GM12878 (cell line): ENCODE measurements at regions of chr21 and their contacts with region 1.

Region 1: GRCh38 chr21:34693192-34693810 is 24.5 kb downstream of the CLIC6 start:
- DNase-seq: no peak
- ATAC-seq: peak; percentile 27
- H3K4me3 ChIP-seq: no peak overlapping the region
- H3K27ac ChIP-seq: peak overlapping the region; percentile 58
- H3K4me1 ChIP-seq: peaks cover 51% of the 10 kb centered on the region
- H3K27me3 ChIP-seq: no peaks in the 10 kb centered on the region
- CTCF ChIP-seq: peak; percentile 66 to 90 (median 73)
- EP300 ChIP-seq: no peak
- POLR2A ChIP-seq: no peak
- RAD21 ChIP-seq: peak; percentile 83

Region 2: DNA sequence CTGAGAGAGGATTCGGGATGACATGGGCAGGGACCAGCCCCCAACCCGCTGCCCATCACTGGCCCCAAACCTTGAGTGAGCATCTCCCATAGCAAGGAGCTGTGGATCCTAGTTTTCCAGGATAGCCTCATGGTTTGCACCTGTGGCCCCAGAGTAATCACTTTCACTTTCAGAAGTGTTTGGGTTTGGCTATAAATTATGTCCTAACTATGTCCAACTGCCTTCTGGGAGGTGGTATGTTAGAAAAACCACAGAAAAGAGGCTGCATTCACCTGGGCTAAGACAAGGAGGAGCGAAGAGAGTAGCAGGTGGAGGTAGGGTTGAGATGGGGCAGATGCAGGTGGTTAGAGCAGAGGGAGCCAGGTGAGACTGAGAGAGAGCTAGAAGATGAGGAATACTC is 43.9 kb before region 1 on chr21:
- CTCF ChIA-PET with region 1: interaction called, 11 read pairs
- POLR2A ChIA-PET with region 1: no interaction called
- RAD21 ChIA-PET with region 1: no interaction called
- SMC1A ChIA-PET with region 1: interaction called, 3 read pairs
- in situ Hi-C with region 1: no loop called
- intact Hi-C with region 1: no loop called
- DNase-seq: no peak
- ATAC-seq: no peak
- H3K4me3 ChIP-seq: no peak overlapping the region
- H3K27ac ChIP-seq: no peak overlapping the region
- H3K4me1 ChIP-seq: no peaks in the 10 kb centered on the region; the same call in 1 of the 2 replicates
- H3K27me3 ChIP-seq: no peaks in the 10 kb centered on the region
- CTCF ChIP-seq: no peak
- EP300 ChIP-seq: no peak
- POLR2A ChIP-seq: no peak
- RAD21 ChIP-seq: no peak

Region 3: GRCh38 chr21:34675171-34675570 is 18.1 kb before region 1 on chr21:
- CTCF ChIA-PET with region 1: interaction called, 50 read pairs
- POLR2A ChIA-PET with region 1: interaction called, 3 read pairs
- RAD21 ChIA-PET with region 1: interaction called, 11 read pairs
- SMC1A ChIA-PET with region 1: interaction called, 10 read pairs
- in situ Hi-C with region 1: no loop called
- intact Hi-C with region 1: no loop called
- DNase-seq: no peak
- ATAC-seq: peak; percentile 10; the same call in 2 of the 3 replicates
- H3K4me3 ChIP-seq: no peak overlapping the region
- H3K27ac ChIP-seq: peak overlapping the region; percentile 81
- H3K4me1 ChIP-seq: peaks cover 29% of the 10 kb centered on the region
- H3K27me3 ChIP-seq: no peaks in the 10 kb centered on the region
- CTCF ChIP-seq: no peak
- EP300 ChIP-seq: no peak
- POLR2A ChIP-seq: no peak
- RAD21 ChIP-seq: no peak

Region 4: GRCh38 chr21:34745557-34746255 is 52.4 kb after region 1 on chr21:
- CTCF ChIA-PET with region 1: interaction called, 40 read pairs
- POLR2A ChIA-PET with region 1: no interaction called
- RAD21 ChIA-PET with region 1: interaction called, 22 read pairs
- SMC1A ChIA-PET with region 1: interaction called, 9 read pairs
- in situ Hi-C with region 1: no loop called
- intact Hi-C with region 1: no loop called
- DNase-seq: peak; percentile 26
- ATAC-seq: peak; percentile 95
- H3K4me3 ChIP-seq: peak overlapping the region; percentile 38; the same call in 1 of the 2 replicates
- H3K27ac ChIP-seq: 0 out of 2 replicates have a peak overlapping the region, but pooled peaks have one; percentile 18
- H3K4me1 ChIP-seq: peaks cover 8% of the 10 kb centered on the region
- H3K27me3 ChIP-seq: no peaks in the 10 kb centered on the region; a peak in 2 of 4 replicates
- CTCF ChIP-seq: peak; percentile 81 to 91 (median 85)
- EP300 ChIP-seq: no peak
- POLR2A ChIP-seq: no peak
- RAD21 ChIP-seq: peak; percentile 92

Region 5: GRCh38 chr21:34888569-34889319 is 195.4 kb after region 1 on chr21:
- CTCF ChIA-PET with region 1: interaction called, 8 read pairs
- POLR2A ChIA-PET with region 1: no interaction called
- RAD21 ChIA-PET with region 1: interaction called, 4 read pairs
- SMC1A ChIA-PET with region 1: interaction called, 5 read pairs
- in situ Hi-C with region 1: no loop called
- intact Hi-C with region 1: loop called (anchors 5 kb)
- DNase-seq: no peak
- ATAC-seq: peak; percentile 68
- H3K4me3 ChIP-seq: peak overlapping the region; percentile 72
- H3K27ac ChIP-seq: peak overlapping the region; percentile 68
- H3K4me1 ChIP-seq: peaks cover 5% of the 10 kb centered on the region
- H3K27me3 ChIP-seq: peaks cover 3 to 9% of the 10 kb centered on the region in 2 experiments
- CTCF ChIP-seq: no peak
- EP300 ChIP-seq: no peak
- POLR2A ChIP-seq: peak; percentile 69
- RAD21 ChIP-seq: no peak

Region 6: DNA sequence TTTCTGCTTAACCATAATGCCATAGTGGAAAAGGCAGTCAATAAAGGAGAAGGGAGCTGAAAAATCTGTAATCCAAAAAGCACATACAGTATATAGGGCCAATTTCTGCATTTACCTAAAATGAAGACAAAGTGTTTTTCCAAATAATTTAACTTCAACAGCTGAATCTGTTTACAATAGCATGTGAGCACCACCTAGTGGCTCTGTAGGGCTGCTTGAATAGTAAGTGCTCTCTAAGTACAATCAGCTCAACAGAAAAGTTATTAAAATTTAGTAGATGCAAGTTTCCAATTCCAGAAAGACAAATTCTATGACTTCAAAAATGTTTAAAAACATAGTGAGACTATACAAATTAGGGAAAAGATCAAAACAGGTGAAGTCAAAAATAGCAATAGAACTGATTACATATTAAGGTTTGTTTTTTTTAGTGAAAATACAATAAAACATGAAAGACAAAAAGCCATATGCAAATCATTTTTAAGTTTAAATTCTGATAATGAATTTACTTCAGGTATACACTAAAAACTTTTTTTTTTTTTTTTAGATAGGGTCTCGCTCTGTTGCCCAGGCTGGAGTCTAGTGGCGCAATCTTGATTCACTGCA is 1147.0 kb after region 1 on chr21:
- CTCF ChIA-PET with region 1: interaction called, 21 read pairs
- POLR2A ChIA-PET with region 1: no interaction called
- RAD21 ChIA-PET with region 1: interaction called, 4 read pairs
- SMC1A ChIA-PET with region 1: interaction called, 8 read pairs
- in situ Hi-C with region 1: no loop called
- intact Hi-C with region 1: no loop called
- DNase-seq: no peak
- ATAC-seq: peak; percentile 76
- H3K4me3 ChIP-seq: no peak overlapping the region
- H3K27ac ChIP-seq: no peak overlapping the region
- H3K4me1 ChIP-seq: no peaks in the 10 kb centered on the region
- H3K27me3 ChIP-seq: peaks cover 0 to 1% of the 10 kb centered on the region in 2 experiments; a peak in 1 of 4 replicates
- CTCF ChIP-seq: peak; percentile 73 to 76 (median 74)
- EP300 ChIP-seq: no peak
- POLR2A ChIP-seq: no peak
- RAD21 ChIP-seq: peak; percentile 87